Mammary epithelial cell (primary cell): ENCODE measurements at regions of chr3 and their contacts with region 1.

Region 1: DNA sequence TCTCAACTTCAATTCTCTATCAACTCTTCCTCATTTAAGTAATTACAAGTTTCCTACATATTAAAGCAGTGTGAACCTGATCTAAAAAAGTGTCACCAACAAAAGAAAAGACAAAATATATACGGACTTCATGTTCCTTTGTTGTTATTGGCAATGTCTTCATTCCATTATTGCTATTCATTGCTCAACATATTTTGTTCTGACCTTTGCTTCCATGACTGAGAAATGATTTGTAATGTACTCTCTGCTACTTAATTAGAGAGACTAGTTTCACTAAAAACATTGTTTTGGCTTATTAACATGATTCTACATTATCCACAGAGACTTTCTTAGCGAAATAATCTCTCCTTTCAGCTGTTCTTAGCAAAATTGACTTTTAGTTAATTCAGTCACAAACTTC is 657.2 kb upstream of the ROBO1 start:
- DNase-seq: no peak
- H3K4me3 ChIP-seq: no peak overlapping the region
- H3K27ac ChIP-seq: no peak overlapping the region
- H3K4me1 ChIP-seq: no peaks in the 10 kb centered on the region
- H3K27me3 ChIP-seq: no peaks in the 10 kb centered on the region
- CTCF ChIP-seq: no peak

Region 2: DNA sequence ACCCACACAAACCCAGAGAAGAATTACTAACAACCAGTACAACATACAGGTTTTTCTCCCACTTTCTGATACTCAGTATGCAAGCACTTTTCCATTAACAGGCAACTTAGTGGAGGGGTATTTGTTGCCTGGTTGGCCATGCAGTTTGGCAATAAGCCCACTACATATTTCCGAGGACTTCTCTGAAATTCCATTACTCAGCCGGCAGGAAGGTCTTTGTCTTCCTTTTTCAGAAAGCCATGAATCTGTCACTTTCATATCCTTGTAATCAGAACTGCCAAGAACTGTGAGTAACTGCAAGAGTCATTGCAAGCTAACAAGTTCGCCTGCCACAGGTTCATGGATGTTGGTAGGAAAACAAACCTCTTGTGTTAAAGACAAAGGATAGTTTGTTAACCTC is 234.9 kb before region 1 on chr3:
- CTCF ChIA-PET with region 1: no interaction called
- dilution Hi-C with region 1: no loop called
- in situ Hi-C with region 1: no loop called
- intact Hi-C with region 1: no loop called
- DNase-seq: peak; percentile 75
- H3K4me3 ChIP-seq: no peak overlapping the region
- H3K27ac ChIP-seq: no peak overlapping the region
- H3K4me1 ChIP-seq: no peaks in the 10 kb centered on the region
- H3K27me3 ChIP-seq: no peaks in the 10 kb centered on the region
- CTCF ChIP-seq: no peak

Region 3: GRCh38 chr3:80374423-80374822 is 50.5 kb before region 1 on chr3:
- CTCF ChIA-PET with region 1: no interaction called
- dilution Hi-C with region 1: loop called (anchors 5 kb)
- in situ Hi-C with region 1: no loop called
- intact Hi-C with region 1: no loop called
- DNase-seq: no peak
- H3K4me3 ChIP-seq: no peak overlapping the region
- H3K27ac ChIP-seq: no peak overlapping the region
- H3K4me1 ChIP-seq: no peaks in the 10 kb centered on the region
- H3K27me3 ChIP-seq: no peaks in the 10 kb centered on the region
- CTCF ChIP-seq: no peak